Gastrocnemius medialis (tissue), 4 donors: ENCODE measurements at regions of chr5 and their contacts with region 1.

Region 1: DNA sequence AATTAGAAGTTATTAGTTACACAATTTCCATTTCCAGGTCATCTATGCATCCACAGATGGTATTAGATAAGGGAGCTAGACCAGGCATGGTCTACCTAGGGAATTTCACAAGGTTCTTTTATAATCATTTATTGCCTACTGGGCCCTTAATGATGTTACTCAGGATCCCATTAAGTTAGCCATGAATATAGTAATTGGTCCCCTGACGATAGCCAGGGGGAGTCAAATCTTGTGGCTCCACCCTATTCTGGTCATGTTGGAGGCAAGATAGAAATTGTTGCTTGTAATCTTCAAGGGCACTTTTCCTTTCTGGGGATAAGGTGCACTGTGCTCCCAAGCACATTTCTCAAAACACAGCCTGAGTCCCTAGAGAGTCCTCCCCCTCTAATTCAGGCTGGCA is 14.1 kb upstream of the ELL2 start:
- DNase-seq: no peak
- ATAC-seq: no peak
- H3K4me3 ChIP-seq: no peak overlapping the region
- H3K27ac ChIP-seq: no peak overlapping the region
- H3K4me1 ChIP-seq: no peaks in the 10 kb centered on the region
- H3K27me3 ChIP-seq: no peaks in the 10 kb centered on the region
- CTCF ChIP-seq: no peak
- POLR2A ChIP-seq: no peak

Region 2: GRCh38 chr5:96324708-96325107 is 349.0 kb after region 1 on chr5:
- in situ Hi-C with region 1: loop called in 2 of 4 experiments (anchors 25 kb)
- intact Hi-C with region 1: loop called (anchors 5 kb)
- DNase-seq: no peak
- ATAC-seq: peak in 1 of 2 donors; percentile 46
- H3K4me3 ChIP-seq: no peak overlapping the region
- H3K27ac ChIP-seq: no peak overlapping the region
- H3K4me1 ChIP-seq: no peaks in the 10 kb centered on the region
- H3K27me3 ChIP-seq: no peaks in the 10 kb centered on the region
- CTCF ChIP-seq: no peak
- POLR2A ChIP-seq: no peak